ENCODE measurements at regions of chr14 and their contacts with region 1.

Region 1: GRCh38 chr14:95683793-95684192 is 2.4 kb upstream of the TCL1B start:
- DNase-seq: no peak
- ATAC-seq: peak; percentile 94
- H3K4me3 ChIP-seq: no peak overlapping the region
- H3K27ac ChIP-seq: no peak overlapping the region
- H3K4me1 ChIP-seq: peaks cover 8% of the 10 kb centered on the region
- H3K27me3 ChIP-seq: no peaks in the 10 kb centered on the region; a peak in 1 of 4 replicates
- CTCF ChIP-seq: peak; percentile 90 to 99 (median 97)
- EP300 ChIP-seq: no peak
- POLR2A ChIP-seq: no peak
- RAD21 ChIP-seq: peak; percentile 95

Region 2: DNA sequence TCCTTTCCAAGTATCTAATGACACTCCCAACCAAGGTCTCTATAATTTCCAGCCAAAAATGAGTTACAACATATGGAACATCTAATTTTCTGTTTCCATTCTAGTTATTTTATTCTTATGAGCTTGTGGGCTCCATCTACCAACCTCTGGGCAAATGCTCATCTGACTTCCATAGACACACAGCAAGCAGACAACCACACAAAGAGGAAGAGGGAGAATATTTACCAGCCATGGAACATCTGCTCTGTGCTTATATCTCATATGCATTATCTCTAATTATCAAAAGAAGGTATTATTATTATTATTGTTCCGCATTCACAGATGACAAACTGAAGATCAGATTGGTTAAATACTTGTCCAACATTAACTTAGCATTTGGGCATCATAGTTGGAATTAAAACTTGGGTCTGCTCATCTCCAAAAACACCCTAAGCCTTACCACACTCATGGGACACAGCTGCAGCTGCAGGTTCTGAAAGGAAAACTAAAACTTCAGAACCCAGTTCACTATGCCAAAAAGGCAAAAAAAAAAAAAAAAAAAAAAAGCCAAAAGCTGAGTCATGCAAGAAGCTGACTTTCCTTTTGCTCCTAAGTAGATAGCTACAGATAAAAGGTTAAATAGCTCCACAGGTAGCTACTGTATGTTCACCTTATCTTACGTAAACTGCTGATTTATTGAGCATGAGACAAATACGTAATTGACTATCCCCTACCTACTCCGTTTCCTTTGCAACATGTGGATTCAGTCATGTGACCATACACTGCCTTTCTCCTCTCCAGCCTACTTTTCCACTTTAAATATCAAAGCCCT is 21.2 kb before region 1 on chr14:
- CTCF ChIA-PET with region 1: interaction called, 98 read pairs
- POLR2A ChIA-PET with region 1: interaction called, 8 read pairs
- RAD21 ChIA-PET with region 1: interaction called, 44 read pairs
- SMC1A ChIA-PET with region 1: interaction called, 78 read pairs
- in situ Hi-C with region 1: no loop called
- intact Hi-C with region 1: no loop called
- DNase-seq: peak; percentile 74
- ATAC-seq: peak; percentile 68
- H3K4me3 ChIP-seq: peak overlapping the region; percentile 64
- H3K27ac ChIP-seq: peak overlapping the region; percentile 82
- H3K4me1 ChIP-seq: peaks cover 56% of the 10 kb centered on the region
- H3K27me3 ChIP-seq: no peaks in the 10 kb centered on the region; a peak in 2 of 4 replicates
- CTCF ChIP-seq: no peak
- EP300 ChIP-seq: 0 out of 4 replicates have a peak, but pooled peaks of 1 of the 2 experiments have one; percentile 19
- POLR2A ChIP-seq: no peak
- RAD21 ChIP-seq: no peak

Region 3: DNA sequence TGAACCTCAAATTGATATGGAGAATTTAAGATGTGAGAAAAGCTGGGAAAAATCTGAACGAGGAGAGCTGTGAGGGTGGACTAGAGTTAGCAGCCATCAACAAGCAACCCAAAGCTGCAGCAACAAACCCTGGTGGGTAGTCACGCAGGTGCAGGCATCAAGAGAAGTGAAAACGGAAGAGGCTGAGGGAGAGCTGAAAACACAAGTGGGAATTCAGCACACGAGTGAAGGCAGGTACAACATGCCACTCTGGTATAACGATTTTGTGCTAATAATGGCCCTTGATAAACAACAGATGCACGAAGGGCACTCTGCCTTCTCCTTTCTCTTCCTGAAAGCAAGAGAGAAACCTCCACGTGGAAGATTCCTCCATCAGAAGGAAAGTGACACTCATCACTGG is 14.0 kb after region 1 on chr14:
- CTCF ChIA-PET with region 1: interaction called, 11 read pairs
- POLR2A ChIA-PET with region 1: no interaction called
- RAD21 ChIA-PET with region 1: interaction called, 3 read pairs
- SMC1A ChIA-PET with region 1: interaction called, 6 read pairs
- in situ Hi-C with region 1: no loop called
- intact Hi-C with region 1: no loop called
- DNase-seq: peak; percentile 56
- ATAC-seq: peak; percentile 66
- H3K4me3 ChIP-seq: peak overlapping the region; percentile 2; the same call in 1 of the 2 replicates
- H3K27ac ChIP-seq: peak overlapping the region; percentile 49
- H3K4me1 ChIP-seq: peaks cover 34% of the 10 kb centered on the region
- H3K27me3 ChIP-seq: no peaks in the 10 kb centered on the region
- CTCF ChIP-seq: peak in 1 of 3 experiments; percentile 23; a peak in 1 of 6 replicates
- EP300 ChIP-seq: peak; percentile 25 to 33; a peak in 1 of 4 replicates
- POLR2A ChIP-seq: no peak
- RAD21 ChIP-seq: no peak

Region 4: DNA sequence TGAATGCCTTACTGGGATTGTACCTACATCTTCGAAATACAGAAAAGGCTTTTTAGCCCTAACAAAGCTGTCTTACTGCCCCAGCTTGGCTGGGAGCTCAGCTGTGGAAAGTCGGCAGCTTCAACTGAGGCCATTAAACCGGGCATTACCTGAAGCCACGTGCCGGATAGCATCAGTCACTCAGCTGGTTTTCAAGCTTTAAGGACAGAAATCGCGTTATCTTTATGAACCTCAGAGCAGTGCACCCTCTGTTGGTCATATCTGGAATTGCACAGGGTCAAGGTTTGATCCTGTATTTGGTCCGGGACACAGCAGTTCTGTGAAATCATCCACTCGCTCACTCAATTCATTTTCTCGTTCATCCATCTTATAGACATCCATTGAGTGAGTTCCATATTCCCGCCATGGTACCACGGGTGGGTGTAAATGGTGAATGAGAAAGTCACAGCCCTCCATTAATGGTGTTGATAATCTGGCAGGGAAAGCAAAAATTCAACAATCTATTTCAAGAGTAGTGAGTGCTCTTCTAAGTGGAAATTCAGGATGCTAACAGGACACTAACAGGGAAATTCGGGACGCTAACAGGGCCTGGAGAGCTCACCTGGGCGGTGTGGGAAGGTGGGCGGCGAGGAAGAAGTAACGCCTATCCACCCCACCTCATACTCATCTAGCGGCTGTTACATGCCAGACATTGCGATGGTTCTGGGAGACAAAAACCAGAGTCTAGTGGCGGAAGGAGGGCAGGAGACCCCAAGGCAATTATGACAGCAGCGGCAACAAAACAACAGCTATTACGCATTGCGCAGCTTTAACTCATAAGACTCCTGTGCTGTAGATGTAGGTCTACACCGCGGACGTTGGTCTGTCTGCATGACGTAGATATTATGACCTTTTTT is 90.7 kb after region 1 on chr14:
- CTCF ChIA-PET with region 1: interaction called, 16 read pairs
- POLR2A ChIA-PET with region 1: no interaction called
- RAD21 ChIA-PET with region 1: interaction called, 5 read pairs
- SMC1A ChIA-PET with region 1: interaction called, 9 read pairs
- in situ Hi-C with region 1: no loop called
- intact Hi-C with region 1: loop called (anchors 1 kb)
- DNase-seq: peak; percentile 16
- ATAC-seq: peak; percentile 76
- H3K4me3 ChIP-seq: no peak overlapping the region
- H3K27ac ChIP-seq: no peak overlapping the region
- H3K4me1 ChIP-seq: no peaks in the 10 kb centered on the region
- H3K27me3 ChIP-seq: no peaks in the 10 kb centered on the region
- CTCF ChIP-seq: peak; percentile 86 to 97 (median 92)
- EP300 ChIP-seq: no peak
- POLR2A ChIP-seq: no peak
- RAD21 ChIP-seq: peak; percentile 78